PC-3 (cell line): ENCODE measurements at regions of chr10 and their contacts with region 1.

Region 1: GRCh38 chr10:99630439-99630838 is 10.2 kb upstream of the SLC25A28 start:
- DNase-seq: peak; percentile 53
- ATAC-seq: peak; percentile 77
- H3K4me3 ChIP-seq: no peak overlapping the region
- H3K27ac ChIP-seq: no peak overlapping the region
- H3K4me1 ChIP-seq: no peaks in the 10 kb centered on the region
- H3K27me3 ChIP-seq: no peaks in the 10 kb centered on the region
- CTCF ChIP-seq: peak; percentile 64

Region 2: DNA sequence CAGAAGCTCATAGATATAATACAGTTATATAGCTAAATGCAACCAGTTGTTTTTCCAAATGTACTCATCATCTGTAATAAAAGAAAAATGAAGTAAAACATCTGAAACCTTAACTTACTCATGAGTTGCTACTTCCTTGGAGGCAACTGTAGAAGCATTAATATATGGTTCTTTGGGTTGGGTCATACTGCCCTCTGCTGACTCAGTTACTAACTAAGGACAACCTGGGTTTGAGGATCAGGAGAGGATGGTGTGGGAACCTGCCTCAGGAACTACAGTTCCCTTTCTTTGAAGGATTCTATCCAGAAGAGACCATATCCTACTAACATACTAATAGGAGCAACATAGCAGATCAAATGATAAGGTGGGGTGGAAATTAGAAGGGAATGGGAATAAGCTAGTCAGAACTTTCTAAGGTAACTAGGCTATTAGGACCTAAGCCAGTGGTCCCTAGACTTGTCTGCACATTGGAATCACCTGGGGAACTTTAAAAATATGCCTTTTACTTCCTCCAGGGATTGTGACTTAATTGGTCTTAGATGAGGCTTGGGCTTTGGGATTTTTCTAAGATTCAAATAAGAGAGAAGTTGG is 80.8 kb after region 1 on chr10:
- CTCF ChIA-PET with region 1: interaction called, 3 read pairs
- POLR2A ChIA-PET with region 1: no interaction called
- intact Hi-C with region 1: loop called (anchors 1 kb)
- DNase-seq: peak; percentile 66
- ATAC-seq: peak; percentile 92
- H3K4me3 ChIP-seq: no peak overlapping the region
- H3K27ac ChIP-seq: no peak overlapping the region
- H3K4me1 ChIP-seq: no peaks in the 10 kb centered on the region
- H3K27me3 ChIP-seq: no peaks in the 10 kb centered on the region
- CTCF ChIP-seq: peak; percentile 70